ENCODE measurements at regions of chr7 and their contacts with region 1.

Region 1: DNA sequence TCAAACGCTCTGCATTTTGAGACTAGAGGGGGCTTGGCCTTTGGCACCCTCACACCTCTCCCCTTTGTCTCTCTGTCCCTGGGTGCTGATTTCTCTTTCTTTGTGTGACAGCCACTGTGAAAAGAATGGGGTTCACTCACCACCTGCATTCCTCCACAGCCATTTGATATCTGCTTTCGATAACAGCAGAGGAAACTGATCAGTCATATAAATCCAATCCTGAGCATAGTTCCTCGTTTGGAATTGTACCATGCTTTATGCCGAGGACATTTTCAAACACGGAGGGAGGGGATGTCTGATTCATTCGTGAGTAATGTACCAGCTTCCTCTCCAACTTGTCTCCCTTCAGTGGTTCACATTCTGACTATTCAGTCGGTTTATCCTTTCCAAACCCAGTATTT is 15.8 kb downstream of the MET start:
- DNase-seq: peak; percentile 73
- ATAC-seq: peak; percentile 43
- H3K4me3 ChIP-seq: peak overlapping the region in 1 of 2 experiments; percentile 35; a peak in 2 of 4 replicates
- H3K27ac ChIP-seq: peak overlapping the region; percentile 92
- H3K4me1 ChIP-seq: peaks cover 89 to 100% of the 10 kb centered on the region in 2 experiments
- H3K27me3 ChIP-seq: no peaks in the 10 kb centered on the region
- CTCF ChIP-seq: no peak
- POLR2A ChIP-seq: no peak
- RAD21 ChIP-seq: no peak; the same call in 1 of the 2 replicates

Region 2: GRCh38 chr7:116671681-116672595 is 15.9 kb before region 1 on chr7 and contains the start of gene MET:
- CTCF ChIA-PET with region 1: interaction called, 6 read pairs
- POLR2A ChIA-PET with region 1: interaction called, 11 read pairs
- RAD21 ChIA-PET with region 1: no interaction called
- intact Hi-C with region 1: no loop called
- DNase-seq: peak; percentile 84
- ATAC-seq: peak; percentile 84
- H3K4me3 ChIP-seq: peak within 1 kb of the TSS; percentile 86 to 90
- H3K27ac ChIP-seq: peak within 1 kb of the TSS; percentile 90
- H3K4me1 ChIP-seq: peaks cover 42 to 56% of the 10 kb centered on the region in 2 experiments
- H3K27me3 ChIP-seq: no peaks in the 10 kb centered on the region
- CTCF ChIP-seq: peak; percentile 49 to 84 (median 56)
- POLR2A ChIP-seq: peak; percentile 68
- RAD21 ChIP-seq: peak; percentile 93
- total RNA-seq, gene MET: 200 TPM

Region 3: DNA sequence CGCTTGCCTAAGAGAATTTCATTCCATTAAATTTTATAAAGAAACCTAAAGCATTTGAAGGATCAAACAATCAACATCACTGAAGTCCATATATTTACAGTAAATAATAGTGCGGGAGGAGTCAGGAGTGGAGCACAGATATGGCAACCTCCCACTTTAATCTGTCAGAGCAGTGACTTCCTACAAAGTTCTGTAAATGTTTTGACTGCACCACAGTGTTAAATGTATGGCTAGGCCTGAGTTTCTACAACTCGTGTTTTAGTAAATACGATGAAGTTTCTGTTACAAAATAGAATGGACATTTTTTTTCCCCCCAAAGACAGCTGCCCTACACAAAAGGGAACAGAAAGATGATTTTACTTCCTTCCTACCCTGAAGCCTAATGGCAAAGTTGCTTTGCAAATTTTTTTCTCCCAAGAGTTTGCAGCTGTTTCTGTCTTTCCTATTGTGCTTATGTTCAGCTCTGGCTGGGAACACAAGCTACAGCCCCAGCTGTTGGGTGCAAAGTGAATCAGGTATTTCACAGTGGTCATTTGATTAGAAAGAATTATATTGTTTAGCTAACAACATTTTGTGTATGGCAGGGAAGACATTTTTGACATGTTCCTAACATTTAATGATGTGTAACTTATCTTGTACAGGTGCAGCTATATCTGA is 46.3 kb after region 1 on chr7:
- CTCF ChIA-PET with region 1: no interaction called
- POLR2A ChIA-PET with region 1: no interaction called
- RAD21 ChIA-PET with region 1: no interaction called
- intact Hi-C with region 1: no loop called
- DNase-seq: no peak
- ATAC-seq: no peak
- H3K4me3 ChIP-seq: no peak overlapping the region
- H3K27ac ChIP-seq: no peak overlapping the region
- H3K4me1 ChIP-seq: peaks cover 54 to 60% of the 10 kb centered on the region in 2 experiments; a peak in 3 of 4 replicates
- H3K27me3 ChIP-seq: no peaks in the 10 kb centered on the region
- CTCF ChIP-seq: no peak
- POLR2A ChIP-seq: no peak
- RAD21 ChIP-seq: no peak

Region 4: GRCh38 chr7:116802746-116803152 is 114.9 kb after region 1 on chr7:
- CTCF ChIA-PET with region 1: interaction called, 3 read pairs
- POLR2A ChIA-PET with region 1: no interaction called
- RAD21 ChIA-PET with region 1: no interaction called
- intact Hi-C with region 1: loop called (anchors 5 kb)
- DNase-seq: peak; percentile 63
- ATAC-seq: peak; percentile 24
- H3K4me3 ChIP-seq: peak overlapping the region in 1 of 2 experiments; percentile 48; a peak in 2 of 4 replicates
- H3K27ac ChIP-seq: peak overlapping the region; percentile 90
- H3K4me1 ChIP-seq: peaks cover 71 to 81% of the 10 kb centered on the region in 2 experiments
- H3K27me3 ChIP-seq: no peaks in the 10 kb centered on the region
- CTCF ChIP-seq: peak; percentile 37 to 65 (median 39); a peak in 4 of 6 replicates
- POLR2A ChIP-seq: no peak
- RAD21 ChIP-seq: peak; percentile 71

Region 5: GRCh38 chr7:117034851-117035464 is 347.2 kb after region 1 on chr7:
- CTCF ChIA-PET with region 1: no interaction called
- POLR2A ChIA-PET with region 1: no interaction called
- RAD21 ChIA-PET with region 1: no interaction called
- intact Hi-C with region 1: no loop called
- DNase-seq: no peak
- ATAC-seq: no peak
- H3K4me3 ChIP-seq: no peak overlapping the region
- H3K27ac ChIP-seq: no peak overlapping the region
- H3K4me1 ChIP-seq: no peaks in the 10 kb centered on the region
- H3K27me3 ChIP-seq: no peaks in the 10 kb centered on the region
- CTCF ChIP-seq: no peak
- POLR2A ChIP-seq: no peak
- RAD21 ChIP-seq: no peak

Measured in HCT116 (cell line).